ENCODE measurements at regions of chr18 and their contacts with region 1.

Region 1: GRCh38 chr18:63320046-63320689 is 599 bp upstream of the BCL2 start:
- DNase-seq: peak; percentile 87 to 89
- H3K4me3 ChIP-seq: peak overlapping the region; percentile 38
- H3K4me1 ChIP-seq: peaks cover 18% of the 10 kb centered on the region
- H3K27me3 ChIP-seq: no peaks in the 10 kb centered on the region

Region 2: GRCh38 chr18:63016270-63016669 is 303.9 kb before region 1 on chr18:
- in situ Hi-C with region 1: loop called (anchors 5 kb)
- DNase-seq: peak; percentile 68 to 71
- H3K4me3 ChIP-seq: no peak overlapping the region
- H3K4me1 ChIP-seq: no peaks in the 10 kb centered on the region
- H3K27me3 ChIP-seq: no peaks in the 10 kb centered on the region

Region 3: GRCh38 chr18:63131106-63131958 is 188.8 kb before region 1 on chr18:
- in situ Hi-C with region 1: loop called (anchors 25 kb)
- DNase-seq: peak in 1 of 2 experiments; percentile 51
- H3K4me3 ChIP-seq: no peak overlapping the region
- H3K4me1 ChIP-seq: no peaks in the 10 kb centered on the region
- H3K27me3 ChIP-seq: no peaks in the 10 kb centered on the region

Measured in HAP-1 (cell line).